Naive thymus-derived CD4-positive, alpha-beta T cell (primary cell): ENCODE measurements at regions of chr19 and their contacts with region 1.

Region 1: DNA sequence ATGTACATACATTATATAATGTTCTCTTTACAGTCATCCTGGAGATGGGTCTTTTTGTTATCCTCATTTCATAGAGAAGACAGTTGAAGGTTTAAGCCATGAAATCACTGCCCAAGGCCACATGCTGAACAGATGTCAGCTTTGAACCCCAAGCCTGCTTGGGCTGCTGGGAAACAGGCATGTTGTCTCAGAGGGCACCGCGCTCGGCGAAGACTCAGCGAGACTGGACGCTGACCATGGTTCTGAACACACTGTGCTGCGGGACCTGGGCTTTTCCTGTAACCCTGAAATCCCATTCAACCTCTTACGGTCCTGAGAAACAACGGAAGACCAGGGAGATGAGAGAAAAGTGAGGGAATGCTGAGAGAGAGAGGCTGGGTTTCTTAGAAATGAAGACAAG is 27.3 kb downstream of the LRFN3 start:
- DNase-seq: peak in 7 of 9 donors; percentile 26 to 57 (median 47)
- ATAC-seq: no peak
- H3K4me3 ChIP-seq: no peak overlapping the region
- H3K4me3 Mint-ChIP-seq: no peak overlapping the region
- H3K27ac ChIP-seq: no peak overlapping the region
- H3K27ac Mint-ChIP-seq: no peak overlapping the region
- H3K4me1 ChIP-seq: peaks cover 10 to 11% of the 10 kb centered on the region in 2 donors
- H3K4me1 Mint-ChIP-seq: peaks cover 0 to 15% (median 9%) of the 10 kb centered on the region in 7 donors
- H3K27me3 ChIP-seq: no peaks in the 10 kb centered on the region
- H3K27me3 Mint-ChIP-seq: peaks cover 0 to 30% (median 0%) of the 10 kb centered on the region in 5 donors

Region 2: GRCh38 chr19:35805526-35806102 is 157.9 kb before region 1 on chr19:
- CTCF ChIA-PET with region 1: no interaction called
- POLR2A ChIA-PET with region 1: no interaction called
- intact Hi-C with region 1: no loop called
- DNase-seq: no peak
- ATAC-seq: no peak
- H3K4me3 ChIP-seq: no peak overlapping the region
- H3K4me3 Mint-ChIP-seq: no peak overlapping the region
- H3K27ac ChIP-seq: no peak overlapping the region
- H3K27ac Mint-ChIP-seq: no peak overlapping the region
- H3K4me1 ChIP-seq: no peaks in the 10 kb centered on the region
- H3K4me1 Mint-ChIP-seq: peaks cover 0 to 10% (median 7%) of the 10 kb centered on the region in 7 donors
- H3K27me3 ChIP-seq: no peaks in the 10 kb centered on the region
- H3K27me3 Mint-ChIP-seq: peaks cover 0 to 8% (median 0%) of the 10 kb centered on the region in 5 donors

Region 3: GRCh38 chr19:35908973-35909683 is 54.4 kb before region 1 on chr19:
- CTCF ChIA-PET with region 1: no interaction called
- POLR2A ChIA-PET with region 1: no interaction called
- intact Hi-C with region 1: no loop called
- DNase-seq: peak in 3 of 9 donors; percentile 17 to 32 (median 20)
- ATAC-seq: peak; percentile 92
- H3K4me3 ChIP-seq: no peak overlapping the region
- H3K4me3 Mint-ChIP-seq: peak overlapping the region in 9 of 10 donors; percentile 30 to 77 (median 66)
- H3K27ac ChIP-seq: peak overlapping the region; percentile 36
- H3K27ac Mint-ChIP-seq: peak overlapping the region; percentile 42 to 89 (median 63)
- H3K4me1 ChIP-seq: peaks cover 18 to 21% of the 10 kb centered on the region in 2 donors
- H3K4me1 Mint-ChIP-seq: peaks cover 21 to 49% (median 38%) of the 10 kb centered on the region in 7 donors
- H3K27me3 ChIP-seq: no peaks in the 10 kb centered on the region
- H3K27me3 Mint-ChIP-seq: no peaks in the 10 kb centered on the region

Region 4: GRCh38 chr19:35919306-35919705 is 44.2 kb before region 1 on chr19:
- CTCF ChIA-PET with region 1: no interaction called
- POLR2A ChIA-PET with region 1: no interaction called
- intact Hi-C with region 1: no loop called
- DNase-seq: no peak
- ATAC-seq: no peak
- H3K4me3 ChIP-seq: no peak overlapping the region
- H3K4me3 Mint-ChIP-seq: no peak overlapping the region
- H3K27ac ChIP-seq: no peak overlapping the region
- H3K27ac Mint-ChIP-seq: no peak overlapping the region
- H3K4me1 ChIP-seq: no peaks in the 10 kb centered on the region
- H3K4me1 Mint-ChIP-seq: peaks cover 0 to 4% (median 0%) of the 10 kb centered on the region in 7 donors
- H3K27me3 ChIP-seq: no peaks in the 10 kb centered on the region
- H3K27me3 Mint-ChIP-seq: peaks cover 0 to 7% (median 0%) of the 10 kb centered on the region in 5 donors

Region 5: DNA sequence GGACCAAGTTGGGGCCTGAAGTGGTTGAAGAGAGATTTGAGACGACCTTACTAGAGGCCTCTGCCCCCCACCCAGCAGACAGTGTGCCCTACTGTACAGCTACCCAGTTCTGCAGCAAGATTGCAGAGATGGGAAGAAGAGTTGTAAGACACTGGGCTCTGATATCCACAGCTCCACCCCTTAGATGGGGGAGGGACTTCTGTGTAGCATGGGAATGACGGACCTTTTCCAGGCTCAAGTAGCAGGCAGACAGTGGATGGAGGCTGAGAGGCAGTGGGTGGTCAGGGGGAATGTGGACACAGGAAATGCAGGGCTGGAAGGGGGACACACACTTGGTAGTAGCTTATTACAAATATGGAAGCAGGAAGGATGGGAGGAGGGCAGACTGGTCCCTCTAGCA is 14.4 kb before region 1 on chr19:
- CTCF ChIA-PET with region 1: interaction called, 28 read pairs
- POLR2A ChIA-PET with region 1: interaction called, 3 read pairs
- intact Hi-C with region 1: no loop called
- DNase-seq: no peak
- ATAC-seq: no peak
- H3K4me3 ChIP-seq: no peak overlapping the region
- H3K4me3 Mint-ChIP-seq: peak overlapping the region in 4 of 10 donors; percentile 15 to 76 (median 32)
- H3K27ac ChIP-seq: no peak overlapping the region
- H3K27ac Mint-ChIP-seq: peak overlapping the region; percentile 33 to 96 (median 79)
- H3K4me1 ChIP-seq: peaks cover 21 to 41% of the 10 kb centered on the region in 2 donors
- H3K4me1 Mint-ChIP-seq: peaks cover 38 to 75% (median 60%) of the 10 kb centered on the region in 7 donors
- H3K27me3 ChIP-seq: no peaks in the 10 kb centered on the region
- H3K27me3 Mint-ChIP-seq: no peaks in the 10 kb centered on the region

Region 6: GRCh38 chr19:35975608-35976214 is 12.2 kb after region 1 on chr19:
- CTCF ChIA-PET with region 1: no interaction called
- POLR2A ChIA-PET with region 1: interaction called, 3 read pairs
- intact Hi-C with region 1: loop called (anchors 1 kb)
- DNase-seq: no peak
- ATAC-seq: no peak
- H3K4me3 ChIP-seq: no peak overlapping the region
- H3K4me3 Mint-ChIP-seq: no peak overlapping the region
- H3K27ac ChIP-seq: no peak overlapping the region
- H3K27ac Mint-ChIP-seq: no peak overlapping the region
- H3K4me1 ChIP-seq: no peaks in the 10 kb centered on the region
- H3K4me1 Mint-ChIP-seq: no peaks in the 10 kb centered on the region
- H3K27me3 ChIP-seq: peaks cover 0 to 3% of the 10 kb centered on the region in 2 donors
- H3K27me3 Mint-ChIP-seq: peaks cover 5 to 24% (median 18%) of the 10 kb centered on the region in 5 donors

Region 7: GRCh38 chr19:35995048-35995993 is 31.8 kb after region 1 on chr19 and contains the start of gene SDHAF1:
- CTCF ChIA-PET with region 1: interaction called, 5 read pairs
- POLR2A ChIA-PET with region 1: interaction called, 8 read pairs
- intact Hi-C with region 1: loop called in 1 of 2 experiments (anchors 1 kb)
- DNase-seq: peak; percentile 77 to 94 (median 87)
- ATAC-seq: peak; percentile 96
- H3K4me3 ChIP-seq: peak within 1 kb of the TSS; percentile 84
- H3K4me3 Mint-ChIP-seq: peak within 1 kb of the TSS; percentile 89 to 99 (median 96)
- H3K27ac ChIP-seq: peak within 1 kb of the TSS; percentile 74
- H3K27ac Mint-ChIP-seq: peak within 1 kb of the TSS; percentile 90 to 97 (median 95)
- H3K4me1 ChIP-seq: peaks cover 11 to 16% of the 10 kb centered on the region in 2 donors
- H3K4me1 Mint-ChIP-seq: peaks cover 22 to 44% (median 33%) of the 10 kb centered on the region in 7 donors
- H3K27me3 ChIP-seq: no peaks in the 10 kb centered on the region
- H3K27me3 Mint-ChIP-seq: no peaks in the 10 kb centered on the region
- total RNA-seq, gene SDHAF1: 7.8 to 26.1 (median 17.8) TPM